ENCODE measurements at regions of chr6 and their contacts with region 1.

Region 1: DNA sequence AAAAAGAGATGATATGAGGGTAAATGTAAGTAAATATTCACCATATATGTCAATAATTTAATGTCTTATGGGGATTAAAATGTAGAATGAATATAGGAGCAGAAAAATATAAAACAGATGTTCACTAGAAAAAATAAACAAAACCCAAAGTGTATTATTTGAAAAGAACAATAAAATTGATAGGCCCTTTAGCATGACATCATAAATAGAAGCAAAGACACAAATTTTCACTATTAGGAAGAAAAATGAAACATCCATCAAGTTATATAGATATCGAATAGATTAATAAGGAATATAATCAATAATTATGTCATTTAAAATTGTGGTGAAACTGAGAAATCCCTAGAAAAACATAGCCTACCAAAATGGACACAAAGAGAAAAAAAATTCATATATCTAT is 40.1 kb upstream of the GMDS start:
- DNase-seq: no peak
- H3K4me3 ChIP-seq: no peak overlapping the region
- H3K27ac ChIP-seq: no peak overlapping the region
- H3K4me1 ChIP-seq: no peaks in the 10 kb centered on the region
- H3K27me3 ChIP-seq: no peaks in the 10 kb centered on the region
- CTCF ChIP-seq: no peak

Region 2: GRCh38 chr6:2061880-2062279 is 223.6 kb before region 1 on chr6:
- CTCF ChIA-PET with region 1: interaction called, 13 read pairs
- POLR2A ChIA-PET with region 1: no interaction called
- intact Hi-C with region 1: no loop called
- DNase-seq: no peak
- H3K4me3 ChIP-seq: no peak overlapping the region
- H3K27ac ChIP-seq: no peak overlapping the region
- H3K4me1 ChIP-seq: no peaks in the 10 kb centered on the region
- H3K27me3 ChIP-seq: no peaks in the 10 kb centered on the region
- CTCF ChIP-seq: no peak

Region 3: GRCh38 chr6:2296781-2297180 is 11.3 kb after region 1 on chr6:
- CTCF ChIA-PET with region 1: no interaction called
- POLR2A ChIA-PET with region 1: no interaction called
- intact Hi-C with region 1: no loop called
- DNase-seq: no peak
- H3K4me3 ChIP-seq: no peak overlapping the region
- H3K27ac ChIP-seq: no peak overlapping the region
- H3K4me1 ChIP-seq: no peaks in the 10 kb centered on the region
- H3K27me3 ChIP-seq: no peaks in the 10 kb centered on the region
- CTCF ChIP-seq: no peak